ENCODE measurements at regions of chr12 and their contacts with region 1.

Region 1: DNA sequence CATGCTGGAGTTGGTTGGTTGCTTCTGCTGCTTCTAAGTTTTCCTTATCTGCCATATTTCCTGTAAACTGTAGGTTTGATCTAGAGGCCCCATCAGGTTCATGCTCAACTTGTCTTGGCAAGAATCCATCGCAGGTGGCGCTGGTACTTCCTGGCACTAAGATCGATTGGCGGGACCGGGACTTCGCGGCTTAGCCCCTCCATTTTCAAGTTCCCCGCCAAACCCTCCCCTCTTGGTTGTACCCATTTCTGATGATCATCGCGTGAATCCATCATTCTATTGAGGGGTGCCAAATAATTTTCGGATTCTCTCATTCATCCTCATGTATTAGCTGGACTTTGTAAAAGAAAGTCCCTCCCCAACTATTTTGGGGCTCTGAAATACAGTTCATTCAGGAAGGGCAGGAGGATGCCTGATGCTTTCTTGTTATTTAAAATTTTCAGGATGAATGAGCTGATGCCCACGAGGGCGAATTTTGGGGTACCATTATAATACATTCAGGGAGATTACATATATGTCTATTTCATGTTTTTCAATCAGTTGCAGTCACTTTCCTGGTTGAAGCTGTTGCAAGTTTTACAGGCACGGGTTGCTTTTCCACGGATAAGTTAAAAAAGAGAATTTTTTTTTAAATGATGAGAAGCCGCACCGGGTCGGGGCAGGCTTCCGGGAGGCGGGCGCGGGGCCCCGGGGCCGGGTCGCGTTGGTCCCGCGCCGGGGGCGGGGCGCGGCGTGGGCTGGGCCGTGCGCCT is 395 bp upstream of the BRI3BP start:
- DNase-seq: peak; percentile 97
- H3K4me3 Mint-ChIP-seq: peak overlapping the region; percentile 74
- H3K27ac Mint-ChIP-seq: peak overlapping the region; percentile 94
- H3K4me1 Mint-ChIP-seq: peaks cover 25% of the 10 kb centered on the region
- H3K27me3 Mint-ChIP-seq: no peaks in the 10 kb centered on the region

Region 2: DNA sequence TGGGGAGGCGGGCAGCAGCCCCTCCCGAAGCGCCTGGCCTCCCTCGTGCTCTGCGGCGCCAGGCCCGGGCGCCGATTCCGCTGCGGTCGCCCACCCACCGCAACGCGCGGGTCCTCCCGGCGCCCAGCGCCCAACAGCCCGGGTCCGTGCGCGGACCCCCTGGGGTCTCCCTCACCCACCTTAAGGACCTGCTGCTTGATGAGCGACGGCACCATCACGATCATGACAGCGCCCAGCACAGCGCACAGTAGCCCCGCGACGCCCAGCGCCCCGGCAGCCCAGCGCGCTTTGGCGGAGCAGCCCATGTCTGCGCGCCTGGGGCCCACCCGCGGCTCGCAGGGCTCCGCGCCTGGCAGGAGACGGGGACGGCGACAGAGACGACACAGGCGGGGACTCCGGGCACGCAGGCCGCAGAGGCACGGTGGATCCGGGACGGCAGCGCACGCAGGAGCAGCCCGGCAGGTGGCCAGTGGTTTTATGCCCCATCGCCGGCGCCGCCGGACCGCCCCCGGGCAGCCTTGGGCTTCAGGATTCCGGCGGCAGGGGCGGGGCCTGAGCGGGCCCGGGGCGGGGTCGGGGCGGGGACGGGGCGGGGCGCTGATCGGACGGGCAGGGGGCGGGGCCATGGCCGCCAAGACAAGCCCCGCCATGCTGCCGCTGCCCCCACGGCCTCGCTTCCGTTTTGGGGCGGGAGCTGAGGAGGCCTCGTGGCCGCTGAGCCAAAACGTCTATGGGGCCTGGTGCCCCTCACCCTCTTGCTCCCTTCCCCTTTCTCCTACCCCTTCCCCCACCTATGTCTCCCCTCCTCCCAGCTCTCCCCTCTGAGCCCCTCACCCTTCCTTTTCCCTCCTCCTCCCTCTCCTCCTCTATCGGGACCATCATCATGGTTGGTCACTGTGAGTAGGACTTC is 129.4 kb before region 1 on chr12 and contains the start of gene SCARB1:
- CTCF ChIA-PET with region 1: no interaction called
- intact Hi-C with region 1: loop called (anchors 1 kb)
- DNase-seq: peak; percentile 79
- H3K4me3 Mint-ChIP-seq: peak within 1 kb of the TSS; percentile 78
- H3K27ac Mint-ChIP-seq: peak within 1 kb of the TSS; percentile 84
- H3K4me1 Mint-ChIP-seq: peaks cover 16% of the 10 kb centered on the region
- H3K27me3 Mint-ChIP-seq: peaks cover 1% of the 10 kb centered on the region
- total RNA-seq, gene SCARB1: 18.2 to 18.3 TPM

Region 3: GRCh38 chr12:124906606-124907261 is 86.3 kb before region 1 on chr12:
- CTCF ChIA-PET with region 1: interaction called, 3 read pairs
- intact Hi-C with region 1: loop called (anchors 2 kb)
- DNase-seq: peak; percentile 98
- H3K4me3 Mint-ChIP-seq: no peak overlapping the region
- H3K27ac Mint-ChIP-seq: peak overlapping the region; percentile 12
- H3K4me1 Mint-ChIP-seq: peaks cover 19% of the 10 kb centered on the region
- H3K27me3 Mint-ChIP-seq: no peaks in the 10 kb centered on the region

Region 4: GRCh38 chr12:124917135-124917840 is 75.8 kb before region 1 on chr12:
- CTCF ChIA-PET with region 1: no interaction called
- intact Hi-C with region 1: loop called (anchors 1 kb)
- DNase-seq: peak; percentile 98
- H3K4me3 Mint-ChIP-seq: peak overlapping the region; percentile 73
- H3K27ac Mint-ChIP-seq: peak overlapping the region; percentile 100
- H3K4me1 Mint-ChIP-seq: peaks cover 83% of the 10 kb centered on the region
- H3K27me3 Mint-ChIP-seq: peaks cover 6% of the 10 kb centered on the region

Region 5: GRCh38 chr12:125049093-125049458 is 56.0 kb after region 1 on chr12:
- CTCF ChIA-PET with region 1: interaction called, 3 read pairs
- intact Hi-C with region 1: loop called (anchors 1 kb)
- DNase-seq: no peak
- H3K4me3 Mint-ChIP-seq: peak overlapping the region; percentile 83
- H3K27ac Mint-ChIP-seq: no peak overlapping the region
- H3K4me1 Mint-ChIP-seq: peaks cover 7% of the 10 kb centered on the region
- H3K27me3 Mint-ChIP-seq: no peaks in the 10 kb centered on the region

Region 6: GRCh38 chr12:125065021-125065795 is 72.2 kb after region 1 on chr12 and contains the start of gene AACS:
- CTCF ChIA-PET with region 1: interaction called, 3 read pairs
- intact Hi-C with region 1: loop called (anchors 1 kb)
- DNase-seq: peak; percentile 76
- H3K4me3 Mint-ChIP-seq: peak within 1 kb of the TSS; percentile 78
- H3K27ac Mint-ChIP-seq: no peak within 1 kb of the TSS
- H3K4me1 Mint-ChIP-seq: peaks cover 11% of the 10 kb centered on the region
- H3K27me3 Mint-ChIP-seq: no peaks in the 10 kb centered on the region
- total RNA-seq, gene AACS: 10.6 to 11.2 TPM